Posterior vena cava (tissue), 2 donors: ENCODE measurements at regions of chr6 and their contacts with region 1.

Region 1: GRCh38 chr6:35583893-35584688 is 71.4 kb upstream of the TULP1 start:
- DNase-seq: no peak

Region 2: DNA sequence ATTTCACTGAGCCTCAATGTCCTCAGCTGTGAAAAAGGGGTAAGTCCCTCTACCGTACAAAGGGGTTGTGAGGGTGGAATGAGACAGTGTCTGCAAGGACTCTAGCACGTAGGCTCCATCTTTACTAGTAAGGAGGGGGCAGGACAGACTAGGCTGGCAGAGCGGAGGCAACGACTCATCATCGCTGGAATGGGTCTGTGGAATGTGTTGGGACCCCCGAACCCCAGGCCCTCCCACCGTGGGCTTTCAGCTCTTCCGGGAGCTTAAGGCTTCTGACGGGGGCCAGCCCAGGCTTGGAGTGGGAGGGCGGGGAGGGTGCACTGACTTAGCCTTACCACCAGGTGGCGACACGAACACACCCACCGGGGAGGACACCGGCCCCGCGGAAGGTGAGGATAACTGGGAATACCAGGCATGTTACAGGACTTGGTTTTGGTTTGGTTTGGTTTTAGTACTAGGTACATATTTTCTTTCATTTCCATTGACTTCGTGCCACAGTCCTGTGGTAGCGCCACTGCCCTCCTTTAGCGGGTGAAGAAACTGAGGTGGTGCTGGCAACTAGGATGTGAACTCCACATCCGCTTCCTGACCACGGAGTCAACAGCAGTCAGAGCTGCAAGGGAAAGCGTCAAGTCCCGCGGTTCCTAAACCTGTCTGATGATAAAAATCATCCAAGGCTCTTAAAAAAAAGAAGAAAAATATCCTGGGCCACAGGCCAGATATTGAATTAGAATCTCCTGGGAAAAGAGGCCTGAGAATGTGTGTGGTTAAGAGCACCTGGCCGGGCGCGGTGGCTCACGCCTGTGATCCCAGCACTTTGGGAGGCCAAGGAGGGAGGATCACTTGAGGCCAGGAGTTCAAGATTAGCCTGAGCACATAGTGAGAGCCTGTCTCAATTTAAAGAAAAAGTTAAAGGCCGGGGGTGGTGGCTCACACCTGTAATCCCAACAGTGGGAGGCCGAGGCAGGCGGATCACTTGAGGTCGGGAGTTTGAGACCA is 61.1 kb before region 1 on chr6:
- intact Hi-C with region 1: loop called in 1 of 2 experiments (anchors 5 kb)
- DNase-seq: peak; percentile 93

Region 3: GRCh38 chr6:35624341-35625070 is 40.4 kb after region 1 on chr6:
- intact Hi-C with region 1: loop called in 1 of 2 experiments (anchors 5 kb)
- DNase-seq: no peak

Region 4: GRCh38 chr6:35635601-35636597 is 51.8 kb after region 1 on chr6:
- intact Hi-C with region 1: no loop called
- DNase-seq: no peak

Region 5: DNA sequence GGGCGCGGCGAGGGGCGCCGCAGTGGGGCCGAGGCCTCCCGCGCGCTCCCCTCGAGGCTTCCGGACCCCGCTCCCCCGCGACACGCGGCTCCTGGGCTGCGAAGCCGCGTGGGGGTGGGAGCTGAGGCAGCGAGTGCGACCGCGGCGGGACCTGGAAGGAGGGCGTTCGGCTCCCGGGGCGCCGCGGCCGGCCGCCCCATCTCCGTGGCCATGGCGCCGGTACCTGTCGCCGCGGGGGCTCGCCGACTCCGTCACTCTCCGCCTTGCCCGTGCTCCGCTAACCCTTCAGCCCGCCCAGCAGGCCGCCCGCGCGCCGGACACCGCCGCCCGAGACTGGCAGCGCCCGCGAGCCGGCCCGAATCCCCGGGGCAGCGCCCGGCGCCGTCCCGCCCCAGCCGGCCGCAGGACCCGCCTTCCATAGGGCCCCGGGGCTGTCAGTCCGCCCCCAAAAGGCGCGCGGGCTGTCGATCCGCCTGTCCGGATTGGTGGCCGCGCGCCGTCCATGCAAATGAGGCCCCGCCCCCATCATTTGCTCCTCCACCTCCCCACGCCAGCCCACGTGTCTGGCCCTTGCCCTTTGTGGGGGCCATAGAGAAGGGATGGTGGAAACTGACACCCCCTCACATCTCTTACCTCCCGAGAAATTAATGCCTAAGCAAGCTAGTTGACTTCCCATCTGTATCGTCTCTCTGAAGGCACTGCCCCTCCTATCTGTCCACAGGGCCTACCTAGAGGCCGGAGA is 104.7 kb after region 1 on chr6 and contains the start of gene FKBP5:
- intact Hi-C with region 1: loop called in 1 of 2 experiments (anchors 10 kb)
- DNase-seq: peak; percentile 99
- total RNA-seq, gene FKBP5: 83.1 to 193 TPM

Region 6: DNA sequence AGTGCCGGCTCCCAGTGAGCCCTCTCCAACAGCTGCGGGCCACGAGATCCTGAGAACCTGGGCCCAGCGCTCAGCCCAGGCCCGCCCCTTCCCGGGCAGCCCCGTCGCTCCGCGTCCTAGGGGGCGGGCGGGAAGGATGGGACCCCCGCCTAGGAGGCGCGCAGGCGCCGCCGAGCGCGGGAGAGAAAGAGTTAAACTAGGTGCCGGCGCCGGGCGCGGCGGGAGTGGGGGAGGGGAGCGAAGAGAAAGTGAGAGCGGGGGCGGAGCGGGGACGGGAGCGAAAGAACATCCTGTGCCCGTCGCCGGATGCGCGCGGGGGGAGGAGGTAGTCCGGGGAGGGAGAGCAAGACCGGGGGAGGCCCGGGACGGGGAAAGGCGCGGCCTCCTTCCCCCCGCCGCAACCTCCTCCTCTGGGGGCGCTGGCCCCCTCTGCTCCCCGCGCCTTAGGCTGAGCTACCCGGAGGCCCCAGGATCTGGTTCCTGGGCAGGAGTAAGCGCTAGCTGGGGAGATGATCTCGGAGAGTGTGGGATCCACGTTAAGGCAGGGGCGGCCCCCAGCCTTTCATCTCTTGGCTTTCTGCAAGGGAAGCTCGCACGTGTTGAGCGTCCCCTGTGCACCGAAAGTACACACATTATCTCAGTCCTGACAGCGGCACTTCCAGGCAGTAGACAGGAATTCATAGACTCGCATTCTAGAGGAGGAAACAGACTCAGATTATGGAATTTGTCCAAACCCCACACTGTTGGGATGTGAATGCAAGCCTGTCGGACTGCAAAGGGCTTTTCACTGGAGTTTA is 147.8 kb after region 1 on chr6:
- intact Hi-C with region 1: loop called (anchors 1 to 2 kb)
- DNase-seq: peak; percentile 99

Region 7: DNA sequence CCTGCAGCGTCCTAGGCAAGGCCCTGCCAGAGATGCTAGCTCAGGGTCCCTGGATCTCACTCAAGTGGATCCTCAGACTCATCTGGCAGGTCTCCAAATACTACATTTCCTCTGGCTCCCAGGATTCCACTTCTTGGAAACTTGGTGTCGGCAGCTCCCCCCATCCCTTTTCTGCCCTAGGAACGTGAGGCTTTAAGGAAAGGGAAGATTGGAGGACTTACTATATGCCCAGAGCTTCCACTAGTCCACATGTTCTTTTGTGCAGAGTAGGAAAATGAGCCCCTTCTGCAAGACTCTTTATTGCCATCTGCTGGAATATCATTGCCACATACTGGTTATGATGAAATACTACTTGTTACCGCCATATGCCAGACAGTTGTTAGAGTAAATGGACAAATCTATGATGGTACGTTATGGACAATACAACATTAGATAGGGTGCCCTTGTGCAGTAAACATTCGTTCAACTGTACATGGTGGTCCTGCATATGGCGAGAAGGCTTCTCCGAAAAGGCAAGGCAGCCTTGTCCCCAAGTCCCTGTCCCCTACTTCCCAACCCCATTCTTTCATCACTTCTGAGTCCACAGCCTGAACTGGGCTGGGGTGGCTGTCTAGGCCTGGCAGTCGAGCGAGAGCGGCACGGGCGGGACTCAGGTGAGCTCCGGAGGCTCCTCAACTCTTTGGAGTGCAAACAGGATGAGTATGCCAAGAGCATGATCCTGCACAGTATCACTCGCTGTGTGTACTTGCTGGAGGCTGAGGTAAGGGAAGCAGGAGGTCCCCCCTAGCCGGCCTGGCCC is 153.5 kb after region 1 on chr6:
- intact Hi-C with region 1: loop called (anchors 1 to 2 kb)
- DNase-seq: no peak